HCT116 (cell line): ENCODE measurements at regions of chr6 and their contacts with region 1.

Region 1: GRCh38 chr6:38818691-38819090 is 103.6 kb downstream of the DNAH8 start:
- DNase-seq: no peak
- ATAC-seq: no peak
- H3K4me3 ChIP-seq: no peak overlapping the region
- H3K27ac ChIP-seq: no peak overlapping the region
- H3K4me1 ChIP-seq: no peaks in the 10 kb centered on the region
- H3K27me3 ChIP-seq: peaks cover 74% of the 10 kb centered on the region
- CTCF ChIP-seq: no peak
- POLR2A ChIP-seq: no peak
- RAD21 ChIP-seq: no peak

Region 2: DNA sequence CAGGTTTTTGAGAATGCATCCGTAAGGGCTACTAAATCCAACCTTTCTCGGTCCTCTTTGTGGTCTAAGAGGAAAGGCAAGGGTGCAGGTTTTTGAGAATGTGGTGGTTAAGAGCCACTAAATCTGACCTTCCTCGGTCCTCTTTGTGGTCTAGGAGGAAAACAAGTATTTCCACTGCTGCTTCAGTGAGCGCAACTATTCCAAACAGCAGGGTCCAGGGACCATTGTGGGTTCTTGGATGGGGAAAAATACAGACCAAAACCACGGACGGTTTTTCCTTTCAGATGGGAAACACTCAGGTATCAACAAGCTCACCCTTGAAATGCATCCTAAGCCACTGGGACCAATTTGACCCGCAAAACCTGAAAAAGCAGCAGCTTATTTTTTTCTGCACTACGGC is 200.8 kb before region 1 on chr6:
- CTCF ChIA-PET with region 1: no interaction called
- POLR2A ChIA-PET with region 1: no interaction called
- RAD21 ChIA-PET with region 1: no interaction called
- intact Hi-C with region 1: no loop called
- DNase-seq: no peak
- ATAC-seq: no peak
- H3K4me3 ChIP-seq: no peak overlapping the region
- H3K27ac ChIP-seq: no peak overlapping the region
- H3K4me1 ChIP-seq: no peaks in the 10 kb centered on the region
- H3K27me3 ChIP-seq: no peaks in the 10 kb centered on the region
- CTCF ChIP-seq: no peak
- POLR2A ChIP-seq: no peak
- RAD21 ChIP-seq: no peak

Region 3: GRCh38 chr6:38852215-38852614 is 33.5 kb after region 1 on chr6:
- CTCF ChIA-PET with region 1: no interaction called
- POLR2A ChIA-PET with region 1: no interaction called
- RAD21 ChIA-PET with region 1: no interaction called
- intact Hi-C with region 1: loop called (anchors 5 kb)
- DNase-seq: no peak
- ATAC-seq: no peak
- H3K4me3 ChIP-seq: no peak overlapping the region
- H3K27ac ChIP-seq: no peak overlapping the region
- H3K4me1 ChIP-seq: no peaks in the 10 kb centered on the region; a peak in 1 of 4 replicates
- H3K27me3 ChIP-seq: peaks cover 84% of the 10 kb centered on the region
- CTCF ChIP-seq: no peak
- POLR2A ChIP-seq: no peak
- RAD21 ChIP-seq: no peak

Region 4: DNA sequence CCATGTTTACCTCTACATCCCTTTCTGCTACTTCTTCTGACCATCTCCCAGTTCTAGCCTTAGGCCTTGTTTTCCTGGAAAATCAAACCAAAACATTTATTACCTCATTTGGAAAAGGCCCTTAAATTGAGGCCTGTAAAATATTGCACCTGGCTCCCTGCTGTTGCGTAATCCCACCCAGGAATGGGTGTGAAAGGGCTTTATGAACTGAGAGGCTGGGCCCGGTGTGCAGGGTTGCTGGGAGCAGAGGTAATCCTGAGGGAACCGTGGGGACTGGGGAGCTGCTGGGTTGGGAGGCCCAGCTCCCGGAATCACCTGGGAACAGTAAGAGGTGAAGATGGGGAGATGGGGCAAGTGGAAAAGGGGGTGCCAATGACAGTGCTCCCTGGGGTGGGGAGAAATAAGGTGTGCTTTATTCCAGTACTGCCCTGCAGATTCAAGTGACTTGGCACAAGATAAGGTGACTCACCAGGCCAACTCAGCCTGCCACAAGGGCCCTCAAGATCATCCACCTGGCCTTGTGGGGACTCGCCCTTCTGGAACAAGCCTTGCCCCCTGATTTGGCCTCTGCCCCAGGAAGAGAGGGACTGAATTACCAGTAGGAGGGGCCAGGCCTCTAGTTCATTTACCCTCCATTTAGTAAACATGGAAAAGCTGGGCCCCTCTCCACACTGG is 366.4 kb after region 1 on chr6:
- CTCF ChIA-PET with region 1: no interaction called
- POLR2A ChIA-PET with region 1: no interaction called
- RAD21 ChIA-PET with region 1: no interaction called
- intact Hi-C with region 1: no loop called
- DNase-seq: no peak
- ATAC-seq: peak; percentile 68
- H3K4me3 ChIP-seq: no peak overlapping the region
- H3K27ac ChIP-seq: peak overlapping the region; percentile 57
- H3K4me1 ChIP-seq: peaks cover 3 to 25% of the 10 kb centered on the region in 2 experiments
- H3K27me3 ChIP-seq: no peaks in the 10 kb centered on the region
- CTCF ChIP-seq: no peak
- POLR2A ChIP-seq: no peak
- RAD21 ChIP-seq: no peak